ENCODE measurements at regions of chr4 and their contacts with region 1.

Region 1: GRCh38 chr4:109836986-109837385 is 9.2 kb downstream of the RRH start:
- DNase-seq: no peak
- ATAC-seq: no peak
- H3K4me3 ChIP-seq: no peak overlapping the region
- H3K27ac ChIP-seq: no peak overlapping the region
- H3K4me1 ChIP-seq: no peaks in the 10 kb centered on the region
- H3K27me3 ChIP-seq: no peaks in the 10 kb centered on the region
- CTCF ChIP-seq: no peak
- EP300 ChIP-seq: no peak
- POLR2A ChIP-seq: no peak
- RAD21 ChIP-seq: no peak

Region 2: DNA sequence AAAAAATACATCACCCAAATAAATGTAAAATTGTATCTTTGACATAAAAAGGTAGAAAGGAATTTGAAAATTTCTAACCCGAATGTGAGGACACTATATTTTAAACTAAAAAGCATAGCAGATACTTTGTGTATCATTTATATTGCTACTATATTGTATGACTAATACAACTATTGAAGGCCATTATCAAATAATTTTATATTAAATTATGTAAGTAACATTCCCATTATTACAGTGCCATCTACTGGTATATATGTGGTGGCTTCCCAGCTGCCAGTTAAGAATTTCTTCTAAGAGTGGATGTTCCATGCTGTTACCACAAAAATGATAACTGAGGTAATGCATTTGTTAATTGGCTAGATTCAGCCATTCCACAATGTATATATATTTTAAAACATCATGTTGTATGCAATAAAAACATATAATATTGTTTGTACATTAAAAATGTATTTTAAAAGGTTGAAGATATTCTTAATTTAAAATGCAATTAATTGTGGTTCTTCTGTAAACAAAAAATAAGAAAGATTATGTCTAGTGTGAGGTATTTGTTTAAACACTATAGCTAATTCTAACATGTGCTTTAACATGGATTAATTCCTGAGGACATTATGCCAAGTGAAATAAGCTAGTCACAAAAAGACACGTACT is 141.0 kb after region 1 on chr4:
- CTCF ChIA-PET with region 1: no interaction called
- POLR2A ChIA-PET with region 1: no interaction called
- RAD21 ChIA-PET with region 1: no interaction called
- SMC1A ChIA-PET with region 1: no interaction called
- in situ Hi-C with region 1: no loop called
- intact Hi-C with region 1: loop called (anchors 10 kb)
- DNase-seq: no peak
- ATAC-seq: peak; percentile 64
- H3K4me3 ChIP-seq: no peak overlapping the region
- H3K27ac ChIP-seq: no peak overlapping the region
- H3K4me1 ChIP-seq: no peaks in the 10 kb centered on the region
- H3K27me3 ChIP-seq: peaks cover 0 to 2% of the 10 kb centered on the region in 2 experiments; a peak in 3 of 4 replicates
- CTCF ChIP-seq: peak; percentile 20 to 48 (median 28); a peak in 4 of 6 replicates
- EP300 ChIP-seq: no peak
- POLR2A ChIP-seq: no peak
- RAD21 ChIP-seq: peak; percentile 58

Region 3: GRCh38 chr4:110310795-110311194 is 473.8 kb after region 1 on chr4:
- CTCF ChIA-PET with region 1: no interaction called
- POLR2A ChIA-PET with region 1: no interaction called
- RAD21 ChIA-PET with region 1: no interaction called
- SMC1A ChIA-PET with region 1: no interaction called
- in situ Hi-C with region 1: no loop called
- intact Hi-C with region 1: no loop called
- DNase-seq: peak; percentile 17
- ATAC-seq: peak; percentile 88
- H3K4me3 ChIP-seq: no peak overlapping the region
- H3K27ac ChIP-seq: no peak overlapping the region
- H3K4me1 ChIP-seq: no peaks in the 10 kb centered on the region
- H3K27me3 ChIP-seq: no peaks in the 10 kb centered on the region
- CTCF ChIP-seq: no peak
- EP300 ChIP-seq: no peak
- POLR2A ChIP-seq: no peak
- RAD21 ChIP-seq: no peak

Measured in GM12878 (cell line).